ENCODE measurements at regions of chr2 and their contacts with region 1.

Region 1: DNA sequence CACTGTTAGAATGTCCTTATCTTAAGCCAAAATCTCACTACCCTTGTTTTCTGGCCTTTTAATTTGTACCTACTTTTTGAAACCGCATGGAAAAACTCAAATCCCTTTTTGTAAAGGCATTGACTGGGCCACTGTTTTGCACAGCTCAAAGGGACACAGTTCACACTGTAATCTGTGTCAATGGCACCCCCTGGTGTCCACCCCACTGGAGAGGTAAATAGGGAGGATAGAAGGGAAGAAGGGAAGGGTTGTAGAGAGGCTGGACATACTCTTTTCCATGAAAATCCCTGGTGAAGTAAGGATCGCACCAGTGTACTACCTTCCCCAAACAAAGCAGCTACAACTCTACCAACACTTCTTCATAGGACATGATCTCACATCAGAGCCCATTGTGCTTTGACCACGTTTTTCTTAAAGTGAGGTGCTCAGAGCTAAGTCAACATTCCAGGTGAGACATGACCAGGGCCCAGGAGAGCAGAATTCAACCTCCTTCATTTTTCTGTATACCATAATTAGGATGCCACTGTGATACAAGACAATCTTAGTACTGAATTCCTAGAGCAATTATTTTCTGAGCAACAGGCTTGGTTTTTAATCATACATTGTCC is 92.4 kb upstream of the RMDN2 start:
- DNase-seq: peak; percentile 84
- H3K4me3 Mint-ChIP-seq: no peak overlapping the region
- H3K27ac Mint-ChIP-seq: no peak overlapping the region
- H3K4me1 Mint-ChIP-seq: peaks cover 37% of the 10 kb centered on the region
- H3K27me3 Mint-ChIP-seq: peaks cover 4% of the 10 kb centered on the region

Region 2: DNA sequence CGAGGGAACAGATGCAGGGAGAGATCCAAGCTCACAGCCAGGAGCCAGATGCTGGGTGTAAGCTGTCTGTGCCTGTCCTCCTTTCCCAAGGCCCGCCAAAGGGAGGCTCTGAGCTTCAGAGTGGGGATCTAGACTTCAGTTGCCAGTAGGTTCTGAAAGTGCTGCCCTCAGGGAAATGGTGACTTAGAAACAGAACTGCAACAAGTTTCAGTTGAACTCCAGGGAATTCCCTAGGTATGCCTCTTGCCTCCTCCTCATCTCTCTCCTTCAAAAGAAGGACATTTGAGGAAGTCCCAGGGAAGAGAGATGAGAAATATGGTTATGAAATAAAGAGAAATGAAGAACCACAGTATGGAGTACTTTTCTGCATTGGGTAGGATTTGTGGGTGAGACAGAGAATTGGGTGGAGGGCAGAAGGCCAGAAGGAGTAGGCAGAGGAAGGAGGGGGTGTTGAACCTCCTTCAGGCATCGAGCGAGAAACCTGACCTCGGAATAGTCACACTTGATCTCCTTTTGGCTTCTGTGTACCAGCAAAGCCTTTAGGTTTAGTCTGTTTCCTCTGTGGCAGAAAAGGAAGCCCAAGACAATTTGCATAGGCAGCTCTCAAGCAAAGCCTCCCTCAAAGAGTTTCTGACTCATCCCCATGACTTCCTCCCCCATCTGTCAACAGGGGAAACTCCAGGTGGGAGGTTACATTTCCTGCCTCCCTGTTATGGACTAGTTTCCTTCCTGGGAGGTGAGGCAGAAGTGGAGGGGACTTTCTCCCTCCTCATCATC is 442.5 kb before region 1 on chr2:
- CTCF ChIA-PET with region 1: interaction called, 88 read pairs
- POLR2A ChIA-PET with region 1: no interaction called
- DNase-seq: peak; percentile 69
- H3K4me3 Mint-ChIP-seq: no peak overlapping the region
- H3K27ac Mint-ChIP-seq: peak overlapping the region; percentile 75
- H3K4me1 Mint-ChIP-seq: no peaks in the 10 kb centered on the region
- H3K27me3 Mint-ChIP-seq: no peaks in the 10 kb centered on the region

Region 3: GRCh38 chr2:37414470-37414949 is 418.2 kb before region 1 on chr2:
- CTCF ChIA-PET with region 1: interaction called, 129 read pairs
- POLR2A ChIA-PET with region 1: interaction called, 4 read pairs
- DNase-seq: no peak
- H3K4me3 Mint-ChIP-seq: no peak overlapping the region
- H3K27ac Mint-ChIP-seq: no peak overlapping the region
- H3K4me1 Mint-ChIP-seq: peaks cover 5% of the 10 kb centered on the region
- H3K27me3 Mint-ChIP-seq: peaks cover 3% of the 10 kb centered on the region

Region 4: DNA sequence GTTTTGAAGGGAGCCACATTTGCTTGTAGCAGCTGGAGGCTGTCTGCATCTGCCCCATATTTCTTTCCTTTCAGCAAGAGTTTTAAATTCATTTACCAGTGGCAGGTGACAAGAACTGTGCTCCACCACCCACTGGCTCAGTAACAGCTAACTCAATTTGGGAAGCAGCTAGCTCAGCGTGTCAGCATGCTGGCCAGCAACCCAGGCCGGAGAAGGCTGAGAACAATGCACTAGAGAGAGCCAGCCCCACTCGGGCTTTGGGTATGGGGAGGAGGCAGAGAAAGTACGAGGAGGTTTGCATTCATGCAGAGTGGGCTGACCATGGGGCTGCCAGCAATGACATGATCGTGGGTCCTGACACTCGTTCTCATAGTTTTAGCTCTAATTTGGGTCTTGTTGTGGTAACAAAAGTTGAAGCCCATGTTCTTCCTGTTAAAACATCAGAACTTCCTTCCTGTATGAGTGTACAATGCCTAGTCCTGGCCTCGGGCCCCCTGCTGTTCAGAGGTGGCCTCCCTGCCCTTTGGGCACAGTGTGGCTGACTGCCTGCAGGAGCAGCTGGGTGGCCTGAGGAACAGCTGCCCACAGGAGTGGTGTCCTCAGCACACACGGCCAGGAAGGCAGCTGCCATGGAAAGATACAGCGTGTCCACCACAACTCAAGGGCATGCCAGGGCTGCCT is 184.2 kb before region 1 on chr2:
- CTCF ChIA-PET with region 1: interaction called, 10 read pairs
- POLR2A ChIA-PET with region 1: interaction called, 3 read pairs
- DNase-seq: peak; percentile 66
- H3K4me3 Mint-ChIP-seq: peak overlapping the region; percentile 12
- H3K27ac Mint-ChIP-seq: peak overlapping the region; percentile 91
- H3K4me1 Mint-ChIP-seq: peaks cover 92% of the 10 kb centered on the region
- H3K27me3 Mint-ChIP-seq: no peaks in the 10 kb centered on the region

Region 5: GRCh38 chr2:37672104-37672869 is 160.4 kb before region 1 on chr2:
- CTCF ChIA-PET with region 1: interaction called, 14 read pairs
- POLR2A ChIA-PET with region 1: interaction called, 5 read pairs
- DNase-seq: peak; percentile 74
- H3K4me3 Mint-ChIP-seq: peak overlapping the region; percentile 81
- H3K27ac Mint-ChIP-seq: peak overlapping the region; percentile 81
- H3K4me1 Mint-ChIP-seq: peaks cover 34% of the 10 kb centered on the region
- H3K27me3 Mint-ChIP-seq: no peaks in the 10 kb centered on the region

Region 6: DNA sequence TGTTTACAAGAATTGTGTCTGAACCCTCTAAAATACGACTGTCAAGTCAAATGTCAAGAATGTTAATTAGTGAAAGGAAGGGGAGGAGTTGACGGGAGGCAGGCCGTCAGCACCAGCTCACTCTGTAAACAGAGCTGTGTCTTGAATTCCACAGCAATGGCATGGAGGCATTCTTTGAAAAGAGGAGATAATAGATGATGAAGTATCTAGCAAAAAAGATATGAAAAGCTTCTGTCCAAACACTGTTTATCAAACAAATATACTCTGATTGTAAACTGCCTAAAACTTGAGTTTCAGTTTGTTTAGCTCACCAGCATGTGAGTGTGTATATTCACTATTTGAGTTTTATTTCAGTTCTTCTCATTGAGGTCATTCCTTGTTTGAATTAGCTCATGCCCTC is 66.6 kb before region 1 on chr2:
- CTCF ChIA-PET with region 1: no interaction called
- POLR2A ChIA-PET with region 1: no interaction called
- DNase-seq: no peak
- H3K4me3 Mint-ChIP-seq: no peak overlapping the region
- H3K27ac Mint-ChIP-seq: no peak overlapping the region
- H3K4me1 Mint-ChIP-seq: peaks cover 4% of the 10 kb centered on the region
- H3K27me3 Mint-ChIP-seq: peaks cover 2% of the 10 kb centered on the region

Region 7: DNA sequence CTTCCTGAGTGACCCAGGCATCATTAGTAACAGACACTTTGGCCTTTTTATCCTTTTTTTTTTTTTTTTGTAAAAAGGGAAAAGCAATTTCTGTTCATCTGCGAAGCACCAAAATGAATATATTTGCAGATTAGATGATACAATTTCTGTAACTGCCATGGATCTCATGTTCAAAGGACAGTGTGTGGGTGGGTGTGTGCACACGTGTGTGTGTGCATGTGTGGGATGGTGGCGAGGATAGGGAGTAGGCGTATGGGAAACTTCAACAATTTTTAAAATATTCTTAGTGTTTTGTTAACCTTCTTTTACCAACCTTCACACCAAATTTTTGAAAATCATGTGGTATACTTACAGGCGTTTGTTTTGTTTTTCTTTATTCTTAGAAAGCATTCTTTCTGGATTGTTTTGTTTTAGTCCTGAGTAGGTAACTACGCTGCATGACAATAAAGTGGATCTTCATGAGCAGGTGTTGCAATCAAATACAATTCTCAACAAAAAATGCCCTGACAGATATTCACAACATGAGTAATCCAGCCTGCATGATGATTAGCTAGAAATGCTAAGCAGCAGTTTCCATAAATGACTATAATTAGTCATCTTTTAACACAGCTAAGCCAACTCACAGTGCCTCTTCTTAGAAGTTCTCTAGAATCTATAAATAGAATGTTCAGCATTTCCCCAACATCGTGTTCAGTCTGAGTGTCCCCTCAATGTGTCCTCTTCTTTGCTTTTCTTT is 38.9 kb after region 1 on chr2:
- CTCF ChIA-PET with region 1: interaction called, 17 read pairs
- POLR2A ChIA-PET with region 1: no interaction called
- DNase-seq: no peak
- H3K4me3 Mint-ChIP-seq: peak overlapping the region; percentile 60
- H3K27ac Mint-ChIP-seq: peak overlapping the region; percentile 94
- H3K4me1 Mint-ChIP-seq: peaks cover 39% of the 10 kb centered on the region
- H3K27me3 Mint-ChIP-seq: no peaks in the 10 kb centered on the region

Region 8: GRCh38 chr2:37912056-37912455 is 79.4 kb after region 1 on chr2:
- CTCF ChIA-PET with region 1: no interaction called
- POLR2A ChIA-PET with region 1: no interaction called
- DNase-seq: no peak
- H3K4me3 Mint-ChIP-seq: no peak overlapping the region
- H3K27ac Mint-ChIP-seq: no peak overlapping the region
- H3K4me1 Mint-ChIP-seq: no peaks in the 10 kb centered on the region
- H3K27me3 Mint-ChIP-seq: peaks cover 13% of the 10 kb centered on the region

Region 9: DNA sequence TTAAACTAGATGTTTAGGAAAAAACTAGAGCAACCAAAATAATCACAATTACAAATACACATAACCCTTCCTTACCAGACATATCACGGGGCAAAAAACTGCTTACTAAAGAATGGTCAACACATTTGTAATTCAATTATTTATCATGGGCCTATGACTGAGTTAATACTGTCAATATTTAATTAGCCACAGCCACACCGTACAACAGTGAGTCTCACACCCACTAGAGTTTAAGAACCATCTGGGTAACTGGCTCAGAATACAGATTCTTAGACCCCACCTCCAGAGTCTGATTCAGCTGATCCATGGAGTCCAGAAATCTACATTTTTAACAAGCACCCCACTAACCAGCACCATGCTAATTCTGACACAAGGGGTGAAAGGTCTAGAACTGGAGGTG is 529.5 kb after region 1 on chr2:
- CTCF ChIA-PET with region 1: no interaction called
- POLR2A ChIA-PET with region 1: no interaction called
- DNase-seq: no peak
- H3K4me3 Mint-ChIP-seq: no peak overlapping the region
- H3K27ac Mint-ChIP-seq: no peak overlapping the region
- H3K4me1 Mint-ChIP-seq: peaks cover 7% of the 10 kb centered on the region
- H3K27me3 Mint-ChIP-seq: no peaks in the 10 kb centered on the region

Measured in activated CD4-positive, alpha-beta memory T cell treated with anti-CD3 and anti-CD28 coated beads, Interleukin-2, amount 10 ng/mL, durations not matched to agents 7 days and 5 days (primary cell).